ENCODE measurements at regions of chr17 and their contacts with region 1.

Region 1: GRCh38 chr17:49997791-49998703 is 3.0 kb upstream of the DLX3 start:
- DNase-seq: peak; percentile 57 to 83
- ATAC-seq: peak; percentile 48 to 85 (median 76)
- H3K4me3 ChIP-seq: no peak overlapping the region
- H3K27ac ChIP-seq: no peak overlapping the region
- H3K4me1 ChIP-seq: peaks cover 7 to 34% (median 30%) of the 10 kb centered on the region in 9 donors
- H3K27me3 ChIP-seq: peaks cover 29 to 97% (median 95%) of the 10 kb centered on the region in 7 donors
- CTCF ChIP-seq: peak; percentile 89 to 96 (median 95)

Region 2: DNA sequence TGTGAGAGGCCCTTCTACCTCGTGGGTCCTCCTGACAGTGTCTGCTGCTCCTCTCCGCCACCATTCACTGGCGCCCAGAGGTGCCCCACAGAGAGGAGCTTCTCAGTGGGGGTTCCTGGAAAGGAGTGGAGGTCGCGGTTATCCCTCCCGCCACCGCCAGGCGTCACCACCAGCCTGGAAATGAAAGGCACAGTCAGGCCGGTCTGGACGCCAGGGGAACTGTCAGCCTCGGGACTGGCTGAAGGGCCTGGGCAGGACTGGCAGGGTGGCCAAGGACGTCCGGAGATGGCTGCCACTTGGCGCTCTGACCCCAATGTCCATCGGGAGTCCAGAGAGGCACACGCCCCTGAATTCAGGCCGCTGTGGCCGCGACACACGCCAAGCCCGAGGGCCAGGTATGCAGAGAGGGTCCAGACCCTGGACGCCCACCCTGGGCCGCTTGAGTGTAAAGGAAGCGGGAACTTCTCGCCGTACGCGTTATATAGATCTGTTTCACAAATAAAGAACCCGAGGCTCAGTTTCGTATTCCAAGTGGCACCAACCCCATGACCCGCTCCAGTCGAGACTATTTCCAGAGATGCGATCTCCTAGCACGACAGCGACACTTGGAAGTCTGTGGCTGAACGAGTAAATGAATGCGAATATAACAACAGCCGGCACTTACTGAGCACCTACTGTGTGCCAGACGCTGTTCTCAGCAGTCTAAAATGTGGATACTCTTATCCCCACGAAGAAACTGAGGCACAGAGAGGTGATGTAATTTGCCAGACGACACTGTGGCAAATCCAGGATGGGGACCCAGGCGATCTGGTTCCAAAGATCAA is 430.0 kb before region 1 on chr17:
- intact Hi-C with region 1: loop called (anchors 2 to 5 kb)
- DNase-seq: peak; percentile 89 to 91
- ATAC-seq: peak; percentile 77 to 86 (median 80)
- H3K4me3 ChIP-seq: peak overlapping the region; percentile 20 to 60 (median 46)
- H3K27ac ChIP-seq: peak overlapping the region; percentile 47 to 89 (median 82)
- H3K4me1 ChIP-seq: peaks cover 0 to 42% (median 34%) of the 10 kb centered on the region in 9 donors
- H3K27me3 ChIP-seq: peaks cover 0 to 14% (median 0%) of the 10 kb centered on the region in 7 donors
- CTCF ChIP-seq: peak; percentile 87 to 98 (median 94)

Region 3: GRCh38 chr17:49707608-49708514 is 290.2 kb before region 1 on chr17 and contains the start of gene SLC35B1:
- intact Hi-C with region 1: loop called in 6 of 10 experiments (anchors 5 to 10 kb)
- DNase-seq: peak; percentile 98 to 100
- ATAC-seq: peak; percentile 99 to 100 (median 99)
- H3K4me3 ChIP-seq: peak within 1 kb of the TSS; percentile 75 to 99 (median 87)
- H3K27ac ChIP-seq: peak within 1 kb of the TSS; percentile 91 to 97 (median 96)
- H3K4me1 ChIP-seq: peaks cover 6 to 46% (median 25%) of the 10 kb centered on the region in 9 donors
- H3K27me3 ChIP-seq: no peaks in the 10 kb centered on the region
- CTCF ChIP-seq: peak; percentile 49 to 89 (median 69)
- total RNA-seq, gene SLC35B1: 60.5 to 92.4 (median 69.1) TPM

Region 4: DNA sequence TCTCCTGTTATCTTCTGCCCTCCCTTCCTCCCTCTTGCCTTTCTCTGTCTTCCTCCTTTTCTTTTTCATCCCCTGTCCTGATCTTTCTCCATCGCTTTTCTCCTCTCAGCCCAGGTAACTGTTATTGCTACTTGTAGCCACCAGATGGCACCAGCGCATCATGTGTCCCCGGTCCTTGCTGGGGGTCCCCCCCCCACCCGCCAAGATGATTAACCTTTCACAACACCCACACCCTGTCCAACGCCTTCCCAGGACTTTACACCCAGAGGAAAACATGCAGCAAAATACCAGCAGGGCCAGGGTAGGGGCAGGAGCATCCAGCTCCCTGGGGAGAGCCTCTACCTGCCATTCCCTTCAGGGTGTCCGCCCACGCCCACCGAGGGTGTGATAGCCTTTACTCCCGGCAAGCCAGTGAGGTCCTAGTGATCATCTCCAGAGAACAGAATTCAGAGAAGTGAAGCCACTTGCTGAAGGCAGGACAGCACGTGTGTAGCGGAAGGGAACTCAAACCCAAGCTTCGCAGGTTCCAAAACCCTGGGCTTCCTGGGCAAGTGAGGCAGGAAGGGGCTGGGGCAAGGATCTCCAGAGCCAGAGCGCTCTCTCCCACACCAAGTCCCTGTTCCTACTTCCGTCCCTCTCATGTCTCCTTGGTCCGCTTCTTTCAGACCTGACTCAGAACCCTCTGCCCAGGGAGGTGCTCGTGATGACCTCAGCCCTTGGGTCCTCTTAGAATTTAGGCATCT is 136.7 kb before region 1 on chr17:
- intact Hi-C with region 1: loop called (anchors 1 to 5 kb)
- DNase-seq: peak in 1 of 2 donors; percentile 27
- ATAC-seq: peak in 7 of 8 donors; percentile 16 to 58 (median 40)
- H3K4me3 ChIP-seq: no peak overlapping the region
- H3K27ac ChIP-seq: no peak overlapping the region
- H3K4me1 ChIP-seq: peaks cover 0 to 12% (median 3%) of the 10 kb centered on the region in 9 donors
- H3K27me3 ChIP-seq: peaks cover 0 to 14% (median 0%) of the 10 kb centered on the region in 7 donors
- CTCF ChIP-seq: peak; percentile 54 to 90 (median 84)

Region 5: DNA sequence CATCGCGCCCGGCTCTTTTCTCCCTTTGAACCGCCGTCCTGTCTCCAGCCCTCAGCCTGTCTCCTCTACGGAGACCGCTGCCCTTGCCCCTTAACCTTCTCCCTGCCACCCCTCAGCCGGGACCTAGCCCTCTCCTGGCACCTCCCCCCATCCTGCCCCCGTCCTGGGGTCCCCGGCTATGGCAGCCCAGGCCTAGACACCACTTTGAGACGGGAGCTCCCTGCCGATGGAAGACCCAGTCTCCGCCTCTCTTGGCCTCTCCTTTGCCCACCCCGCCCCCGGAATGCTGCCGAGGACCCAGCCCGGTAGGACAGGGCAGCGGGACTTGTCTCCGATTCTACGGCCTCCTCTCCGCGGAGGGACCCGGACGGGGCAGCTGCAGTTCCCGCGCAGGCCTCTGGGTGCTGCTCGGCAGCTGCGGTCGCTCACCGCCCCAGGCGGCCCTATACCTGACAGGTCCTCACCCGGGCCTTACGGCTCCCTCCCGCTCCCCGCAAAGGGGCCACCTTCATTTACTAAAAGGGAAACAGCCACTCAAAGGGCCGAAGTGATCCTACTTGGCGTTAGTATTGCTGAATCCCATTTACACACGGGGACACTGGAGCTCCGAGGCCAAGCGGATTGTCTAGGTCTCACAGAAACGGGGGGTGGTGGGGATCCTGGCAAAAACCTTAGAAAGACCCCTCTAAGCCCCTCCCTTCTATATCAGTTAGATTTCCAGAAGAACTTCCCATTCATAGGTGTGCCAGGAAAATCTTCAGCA is 117.6 kb before region 1 on chr17:
- intact Hi-C with region 1: loop called (anchors 1 to 5 kb)
- DNase-seq: peak; percentile 61 to 76
- ATAC-seq: peak; percentile 83 to 93 (median 91)
- H3K4me3 ChIP-seq: peak overlapping the region in 1 of 10 donors; percentile 17
- H3K27ac ChIP-seq: no peak overlapping the region
- H3K4me1 ChIP-seq: peaks cover 0 to 9% (median 7%) of the 10 kb centered on the region in 9 donors
- H3K27me3 ChIP-seq: peaks cover 3 to 73% (median 58%) of the 10 kb centered on the region in 7 donors
- CTCF ChIP-seq: peak; percentile 89 to 100 (median 96)